ENCODE measurements at regions of chr12 and their contacts with region 1.

Region 1: DNA sequence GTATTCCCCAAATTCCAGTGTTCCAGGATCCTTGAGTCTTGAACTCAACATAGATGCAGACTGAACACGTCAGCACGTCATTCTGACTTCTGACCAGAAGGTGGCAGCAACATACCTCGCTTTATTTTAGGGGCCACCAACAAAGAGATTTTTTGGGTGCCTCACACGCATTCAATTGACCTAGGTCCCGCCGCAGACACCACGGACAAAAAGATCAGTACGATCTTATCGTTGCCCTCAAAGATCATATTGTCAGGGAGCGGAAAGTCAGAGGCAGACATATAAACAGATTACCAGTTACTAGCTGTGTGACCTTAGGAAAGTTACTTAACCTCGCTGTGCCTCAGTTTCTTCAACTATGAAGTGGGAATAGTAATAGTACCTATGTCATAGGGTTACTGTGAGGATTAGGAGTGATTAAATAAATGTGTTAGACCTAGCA is 6.5 kb upstream of the PRPH start:
- DNase-seq: peak in 1 of 2 donors; percentile 68
- ATAC-seq: no peak
- H3K4me3 ChIP-seq: no peak overlapping the region
- H3K27ac ChIP-seq: no peak overlapping the region
- H3K4me1 ChIP-seq: no peaks in the 10 kb centered on the region
- H3K27me3 ChIP-seq: no peaks in the 10 kb centered on the region

Region 2: GRCh38 chr12:49331380-49332222 is 43.2 kb after region 1 on chr12:
- intact Hi-C with region 1: loop called (anchors 2 to 5 kb)
- DNase-seq: peak in 1 of 2 donors; percentile 87
- ATAC-seq: peak; percentile 84
- H3K4me3 ChIP-seq: no peak overlapping the region
- H3K27ac ChIP-seq: no peak overlapping the region
- H3K4me1 ChIP-seq: no peaks in the 10 kb centered on the region
- H3K27me3 ChIP-seq: no peaks in the 10 kb centered on the region

Region 3: DNA sequence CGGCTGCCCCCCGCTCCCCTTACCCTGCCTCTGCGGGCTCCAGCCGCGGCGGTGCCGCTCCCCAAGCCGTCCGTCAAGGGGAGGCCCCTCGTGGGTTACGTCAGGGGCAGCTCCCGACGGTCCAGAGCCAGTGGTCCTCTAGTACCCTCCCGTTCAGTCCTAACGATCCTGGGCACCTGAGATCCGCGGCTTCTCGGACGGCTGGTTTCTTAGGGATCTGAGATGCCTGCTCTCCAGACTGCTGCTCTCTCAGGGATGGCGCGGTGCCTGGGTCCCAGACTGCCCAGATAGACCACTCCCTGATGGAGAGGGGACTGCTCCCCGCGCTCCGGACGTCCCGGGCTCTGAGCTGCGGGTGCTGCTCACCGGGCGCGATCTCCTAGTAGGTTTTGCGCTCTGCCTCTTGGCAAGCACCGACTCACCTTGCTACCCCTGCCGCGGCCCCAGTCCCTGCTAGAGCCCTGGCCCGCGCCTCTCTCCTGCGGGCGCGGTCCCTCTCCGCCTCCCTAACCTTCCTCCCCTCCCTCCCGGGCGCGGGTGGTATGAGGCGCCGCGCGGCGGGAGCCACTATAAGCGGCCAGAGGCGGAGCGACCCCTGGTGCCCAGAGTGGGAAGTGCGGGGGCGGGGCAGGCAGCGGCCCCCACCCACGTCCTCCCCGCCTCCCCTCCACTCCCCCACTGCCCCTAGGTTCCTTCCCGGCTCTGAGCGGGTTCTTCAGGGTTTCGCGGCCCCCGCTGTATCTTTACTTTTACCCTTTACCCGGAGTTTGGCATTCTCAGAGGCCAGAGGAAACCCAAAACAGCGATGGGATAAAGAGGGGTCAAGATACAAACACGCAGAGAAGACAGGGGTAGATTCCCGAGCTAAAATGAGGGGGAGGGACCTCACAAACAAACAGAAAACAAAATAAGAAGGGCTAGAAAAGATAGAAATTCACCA is 48.5 kb after region 1 on chr12 and contains the start of gene C1QL4:
- intact Hi-C with region 1: loop called (anchors 2 to 5 kb)
- DNase-seq: peak; percentile 85 to 96
- ATAC-seq: peak; percentile 91
- H3K4me3 ChIP-seq: peak within 1 kb of the TSS in 1 of 2 donors; percentile 31
- H3K27ac ChIP-seq: no peak within 1 kb of the TSS
- H3K4me1 ChIP-seq: no peaks in the 10 kb centered on the region
- H3K27me3 ChIP-seq: no peaks in the 10 kb centered on the region
- total RNA-seq, gene C1QL4: not detected

Region 4: DNA sequence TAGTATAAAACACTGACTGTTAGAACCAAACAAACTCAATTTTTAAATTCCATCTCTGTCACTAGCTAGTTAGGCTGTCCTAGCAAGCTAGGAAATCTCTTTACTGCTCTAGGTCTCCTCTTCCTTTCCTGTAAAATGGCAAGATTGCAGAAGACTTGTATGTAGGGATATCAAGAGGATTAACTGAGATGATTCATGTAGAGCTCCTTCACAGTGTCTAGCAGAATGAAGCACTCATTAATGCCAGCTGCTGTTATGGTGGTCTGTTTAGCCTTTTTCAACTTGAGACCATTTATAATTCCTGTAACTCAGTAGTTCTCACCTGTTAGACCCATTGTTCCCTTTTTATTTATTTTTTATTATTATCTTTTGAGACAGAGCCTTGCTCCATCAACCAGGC is 182.6 kb after region 1 on chr12:
- intact Hi-C with region 1: no loop called
- DNase-seq: no peak
- ATAC-seq: no peak
- H3K4me3 ChIP-seq: no peak overlapping the region
- H3K27ac ChIP-seq: no peak overlapping the region
- H3K4me1 ChIP-seq: no peaks in the 10 kb centered on the region
- H3K27me3 ChIP-seq: no peaks in the 10 kb centered on the region

Measured in aorta (tissue), 5 donors.